Astrocyte of the cerebellum (primary cell): ENCODE measurements at regions of chr7 and their contacts with region 1.

Region 1: GRCh38 chr7:119026391-119026790 is 801.9 kb downstream of the ANKRD7 start:
- DNase-seq: no peak
- H3K4me3 ChIP-seq: no peak overlapping the region
- CTCF ChIP-seq: no peak

Region 2: GRCh38 chr7:118583641-118584040 is 442.8 kb before region 1 on chr7:
- in situ Hi-C with region 1: loop called (anchors 10 kb)
- DNase-seq: no peak
- H3K4me3 ChIP-seq: no peak overlapping the region
- CTCF ChIP-seq: no peak

Region 3: DNA sequence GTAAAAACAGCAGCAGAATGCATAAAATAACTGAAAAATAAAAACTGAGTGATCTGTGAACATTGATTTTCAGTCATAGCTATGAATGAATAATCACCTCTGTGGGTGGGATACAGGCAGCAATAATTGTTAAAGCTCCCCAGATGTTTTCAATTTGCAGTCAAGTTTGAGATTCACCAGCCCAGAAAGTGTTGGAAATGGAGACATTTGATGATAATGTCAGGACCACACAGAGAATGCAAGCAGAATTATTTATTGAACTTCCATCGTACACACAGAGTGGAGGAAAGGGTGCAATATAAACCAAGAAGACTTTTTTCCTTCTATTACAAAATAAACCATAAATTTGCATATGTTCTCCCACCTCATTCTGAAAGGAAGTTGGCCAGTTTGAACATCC is 200.1 kb before region 1 on chr7:
- in situ Hi-C with region 1: no loop called
- DNase-seq: no peak
- H3K4me3 ChIP-seq: no peak overlapping the region
- CTCF ChIP-seq: no peak

Region 4: DNA sequence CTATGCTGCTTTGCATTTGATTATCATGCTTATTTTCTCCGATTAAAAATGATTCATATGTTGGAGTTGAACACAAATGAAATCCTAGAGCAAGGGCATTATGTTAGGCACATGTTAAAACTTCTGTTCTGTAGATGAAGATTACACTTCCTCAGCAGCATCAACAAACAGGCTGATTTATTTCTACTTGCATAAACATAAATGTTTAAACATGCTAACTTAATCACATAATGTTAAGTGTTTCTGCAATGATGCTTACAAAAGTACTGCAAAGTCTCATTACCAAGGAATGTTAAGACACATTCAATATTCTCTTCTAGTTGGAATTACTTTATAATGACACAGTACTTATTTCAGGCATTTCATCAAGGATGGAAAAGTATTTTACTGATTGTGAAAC is 31.0 kb before region 1 on chr7:
- in situ Hi-C with region 1: no loop called
- DNase-seq: no peak
- H3K4me3 ChIP-seq: no peak overlapping the region
- CTCF ChIP-seq: no peak